PC-3 (cell line): ENCODE measurements at regions of chr2 and their contacts with region 1.

Region 1: DNA sequence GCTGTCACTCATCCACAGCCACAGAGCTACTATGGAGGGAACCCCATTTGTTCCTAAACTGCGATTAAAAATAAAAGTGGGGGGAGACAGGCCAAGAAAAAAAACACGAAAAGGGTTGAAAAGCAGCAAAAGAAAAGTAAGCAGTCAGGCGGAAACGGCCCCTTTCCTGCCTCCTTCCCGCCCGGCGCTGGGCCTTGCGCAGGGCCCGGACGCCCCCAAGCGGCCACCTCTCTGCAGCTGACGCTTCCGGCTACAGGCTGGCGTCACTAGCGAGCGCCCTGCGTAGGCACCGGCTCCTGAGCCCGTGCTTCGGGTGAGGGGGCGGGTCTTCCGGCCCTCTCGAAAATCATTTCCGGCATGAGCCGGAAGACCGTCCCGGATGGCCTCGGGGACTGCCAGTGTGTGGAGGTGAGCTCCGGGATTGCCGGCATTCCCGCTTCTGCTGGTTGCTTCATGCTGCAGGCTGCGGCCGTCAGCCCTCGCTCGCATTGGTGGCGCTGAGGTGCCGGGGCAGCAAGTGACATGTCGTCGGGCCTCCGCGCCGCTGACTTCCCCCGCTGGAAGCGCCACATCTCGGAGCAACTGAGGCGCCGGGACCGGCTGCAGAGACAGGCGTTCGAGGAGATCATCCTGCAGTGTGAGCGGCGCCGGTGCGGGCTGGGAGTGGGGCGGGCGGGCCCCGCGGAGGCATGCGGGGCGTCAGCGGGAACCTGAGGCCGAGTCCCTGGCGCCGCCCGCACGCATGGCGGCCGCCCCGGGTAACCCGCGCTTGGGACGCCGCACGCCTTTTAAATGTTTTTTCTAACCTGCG is at the start of gene ATG16L1:
- DNase-seq: peak; percentile 97
- ATAC-seq: peak; percentile 70
- H3K4me3 ChIP-seq: peak within 1 kb of the TSS; percentile 97
- H3K27ac ChIP-seq: peak within 1 kb of the TSS; percentile 73
- H3K4me1 ChIP-seq: peaks cover 49% of the 10 kb centered on the region
- H3K27me3 ChIP-seq: no peaks in the 10 kb centered on the region
- CTCF ChIP-seq: peak; percentile 92
- total RNA-seq, gene ATG16L1: 126 and 173 TPM in 2 replicates

Region 2: GRCh38 chr2:232611551-232612218 is 639.8 kb before region 1 on chr2:
- CTCF ChIA-PET with region 1: no interaction called
- POLR2A ChIA-PET with region 1: no interaction called
- intact Hi-C with region 1: loop called (anchors 5 kb)
- DNase-seq: peak; percentile 93
- ATAC-seq: peak; percentile 97
- H3K4me3 ChIP-seq: no peak overlapping the region
- H3K27ac ChIP-seq: peak overlapping the region; percentile 38
- H3K4me1 ChIP-seq: peaks cover 23% of the 10 kb centered on the region
- H3K27me3 ChIP-seq: no peaks in the 10 kb centered on the region
- CTCF ChIP-seq: peak; percentile 95

Region 3: DNA sequence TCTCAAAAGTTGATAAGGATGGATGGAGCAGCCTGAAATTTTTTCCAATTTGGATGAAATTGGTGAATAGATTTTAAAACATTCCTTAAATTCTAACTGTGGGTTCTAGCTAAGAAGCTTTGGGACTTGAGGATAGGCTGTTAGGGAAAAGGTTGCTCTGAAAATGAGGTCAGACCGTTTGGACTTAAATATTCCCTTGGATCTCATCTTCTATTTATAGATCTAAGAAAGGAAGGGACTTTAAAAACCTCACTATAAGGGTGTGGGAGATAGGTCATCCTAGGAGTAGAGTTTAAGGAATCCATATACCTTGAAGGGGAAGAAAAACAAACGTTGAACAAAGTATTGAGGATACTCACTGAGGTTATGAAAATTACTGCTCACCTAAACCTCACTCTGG is 398.8 kb before region 1 on chr2:
- CTCF ChIA-PET with region 1: no interaction called
- POLR2A ChIA-PET with region 1: no interaction called
- intact Hi-C with region 1: loop called (anchors 1 kb)
- DNase-seq: no peak
- ATAC-seq: no peak
- H3K4me3 ChIP-seq: no peak overlapping the region
- H3K27ac ChIP-seq: no peak overlapping the region
- H3K4me1 ChIP-seq: peaks cover 18% of the 10 kb centered on the region
- H3K27me3 ChIP-seq: no peaks in the 10 kb centered on the region
- CTCF ChIP-seq: no peak

Region 4: DNA sequence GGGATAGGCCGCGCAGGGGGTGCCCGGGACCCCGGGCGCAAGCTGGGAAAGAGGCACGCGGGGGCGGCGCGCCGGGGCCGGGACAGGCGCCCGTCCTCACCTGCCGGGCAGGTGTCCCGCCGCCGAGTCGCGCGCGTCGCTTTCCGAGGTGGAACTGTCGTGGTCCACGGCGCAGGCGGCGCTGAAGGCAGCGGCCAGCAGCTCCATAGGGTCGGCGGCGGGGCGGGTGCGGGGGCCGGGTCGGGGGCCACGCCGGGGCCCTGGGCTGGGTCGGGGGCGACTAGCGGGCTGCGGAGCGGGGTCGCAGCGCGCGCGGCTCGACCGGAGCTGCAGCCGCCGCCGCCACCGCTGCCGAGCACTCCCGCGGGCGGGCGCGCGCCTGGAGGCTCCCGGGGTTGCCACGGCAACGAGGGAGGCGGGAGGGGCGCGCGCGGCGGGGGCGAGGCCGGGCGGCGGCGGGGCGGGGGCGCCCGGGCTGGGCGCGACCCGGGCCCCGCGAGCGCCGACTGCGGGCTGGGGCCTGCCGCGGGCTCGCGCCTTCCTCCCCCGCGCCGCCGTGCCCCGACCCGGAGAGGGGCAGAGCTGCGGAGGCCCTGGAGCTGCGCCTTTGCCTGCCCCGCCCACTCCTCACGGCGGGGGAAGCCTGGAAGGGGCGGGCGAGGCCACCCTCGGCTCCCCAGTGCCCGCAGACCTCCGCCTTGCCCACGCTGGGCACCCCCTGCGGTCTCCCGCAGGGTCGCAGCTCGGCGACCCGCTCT is 323.5 kb before region 1 on chr2:
- CTCF ChIA-PET with region 1: no interaction called
- POLR2A ChIA-PET with region 1: interaction called, 3 read pairs
- intact Hi-C with region 1: loop called (anchors 1 kb)
- DNase-seq: peak; percentile 40
- ATAC-seq: peak; percentile 13
- H3K4me3 ChIP-seq: peak overlapping the region; percentile 71
- H3K27ac ChIP-seq: peak overlapping the region; percentile 47; the same call in 1 of the 2 replicates
- H3K4me1 ChIP-seq: peaks cover 25% of the 10 kb centered on the region
- H3K27me3 ChIP-seq: no peaks in the 10 kb centered on the region
- CTCF ChIP-seq: no peak

Region 5: GRCh38 chr2:232988765-232989085 is 262.8 kb before region 1 on chr2:
- CTCF ChIA-PET with region 1: interaction called, 5 read pairs
- POLR2A ChIA-PET with region 1: no interaction called
- intact Hi-C with region 1: loop called (anchors 2 kb)
- DNase-seq: no peak
- ATAC-seq: no peak
- H3K4me3 ChIP-seq: no peak overlapping the region
- H3K27ac ChIP-seq: peak overlapping the region; percentile 98
- H3K4me1 ChIP-seq: peaks cover 29% of the 10 kb centered on the region
- H3K27me3 ChIP-seq: no peaks in the 10 kb centered on the region
- CTCF ChIP-seq: no peak

Region 6: GRCh38 chr2:233053928-233054784 is 197.4 kb before region 1 on chr2:
- CTCF ChIA-PET with region 1: interaction called, 10 read pairs
- POLR2A ChIA-PET with region 1: interaction called, 3 read pairs
- intact Hi-C with region 1: loop called (anchors 1 kb)
- DNase-seq: peak; percentile 62
- ATAC-seq: no peak
- H3K4me3 ChIP-seq: no peak overlapping the region
- H3K27ac ChIP-seq: no peak overlapping the region
- H3K4me1 ChIP-seq: peaks cover 50% of the 10 kb centered on the region
- H3K27me3 ChIP-seq: no peaks in the 10 kb centered on the region
- CTCF ChIP-seq: peak; percentile 96

Region 7: DNA sequence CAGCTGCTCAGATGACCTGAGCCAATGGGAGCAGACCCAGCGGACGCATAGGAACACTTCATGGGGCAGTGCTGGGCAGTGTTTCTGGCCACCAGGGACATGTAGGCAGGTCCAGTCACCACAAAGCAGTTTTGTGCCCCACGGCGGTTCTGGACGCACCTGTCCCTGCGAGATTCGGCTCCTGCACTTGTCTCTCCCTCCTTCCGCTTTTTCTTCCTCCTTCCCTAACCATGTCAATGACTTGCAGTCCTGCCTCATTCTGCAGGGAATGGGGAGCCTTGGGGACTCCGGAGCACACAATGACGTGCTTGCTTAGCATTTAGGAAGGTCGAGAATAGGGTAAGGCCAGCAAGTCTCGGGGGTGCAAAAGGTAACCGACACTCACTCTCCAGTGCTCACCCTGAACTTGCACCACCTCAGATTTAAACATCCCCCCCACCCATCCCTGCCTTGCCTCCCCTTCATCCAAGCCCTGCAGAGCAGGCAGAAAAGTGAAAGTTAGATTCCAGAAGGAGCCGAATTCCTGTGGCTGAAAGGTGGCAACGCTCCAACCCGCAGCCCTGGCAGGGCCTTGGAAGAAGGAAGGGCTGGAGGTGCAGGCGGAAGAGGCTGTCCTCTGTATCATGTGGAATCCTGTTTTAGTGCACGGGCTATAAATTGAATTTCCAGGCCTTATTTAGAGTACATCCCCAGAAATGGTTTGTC is 40.5 kb before region 1 on chr2:
- CTCF ChIA-PET with region 1: no interaction called
- POLR2A ChIA-PET with region 1: no interaction called
- intact Hi-C with region 1: loop called (anchors 1 kb)
- DNase-seq: peak; percentile 95
- ATAC-seq: peak; percentile 81
- H3K4me3 ChIP-seq: no peak overlapping the region
- H3K27ac ChIP-seq: peak overlapping the region; percentile 62
- H3K4me1 ChIP-seq: peaks cover 37% of the 10 kb centered on the region
- H3K27me3 ChIP-seq: no peaks in the 10 kb centered on the region
- CTCF ChIP-seq: no peak